ENCODE measurements at regions of chr7 and their contacts with region 1.

Region 1: DNA sequence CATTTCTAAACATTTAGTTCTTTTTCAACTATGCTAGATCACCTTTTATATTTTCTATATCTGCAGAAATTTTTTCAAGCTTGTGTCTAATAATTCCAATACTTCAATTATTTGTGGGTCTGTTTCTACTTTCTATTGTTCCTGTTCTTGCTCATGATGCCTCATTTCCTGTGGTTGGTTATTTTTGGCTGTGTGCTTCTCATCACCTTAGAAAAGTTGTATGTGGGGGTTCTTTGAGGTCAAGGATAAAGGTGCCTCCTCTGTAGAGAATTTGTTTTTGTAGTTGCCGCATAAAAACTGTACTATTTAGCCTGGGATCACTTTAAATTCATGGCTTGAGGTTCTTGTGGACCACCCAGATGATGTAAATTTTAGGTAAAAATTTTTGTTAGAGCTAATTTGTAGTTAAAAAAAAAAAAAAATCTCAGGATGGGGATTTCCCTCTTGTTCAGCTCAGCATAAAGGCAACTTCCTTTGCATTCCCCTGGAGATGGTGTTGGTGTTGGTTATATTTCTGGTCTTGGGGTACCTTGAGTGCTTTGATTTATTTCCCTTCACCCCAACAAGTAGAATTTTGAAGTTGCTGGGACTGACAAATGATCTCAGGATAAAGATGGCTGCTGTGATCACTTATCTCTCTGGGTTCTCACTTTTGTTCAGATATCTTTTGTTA is 27.0 kb upstream of the JAZF1 start:
- DNase-seq: no peak
- H3K4me3 Mint-ChIP-seq: peak overlapping the region; percentile 2
- H3K27ac Mint-ChIP-seq: peak overlapping the region; percentile 7
- H3K4me1 Mint-ChIP-seq: peaks cover 38% of the 10 kb centered on the region
- H3K27me3 Mint-ChIP-seq: peaks cover 8% of the 10 kb centered on the region

Region 2: GRCh38 chr7:28130277-28130676 is 77.3 kb before region 1 on chr7:
- intact Hi-C with region 1: no loop called
- DNase-seq: no peak
- H3K4me3 Mint-ChIP-seq: no peak overlapping the region
- H3K27ac Mint-ChIP-seq: no peak overlapping the region
- H3K4me1 Mint-ChIP-seq: no peaks in the 10 kb centered on the region
- H3K27me3 Mint-ChIP-seq: no peaks in the 10 kb centered on the region

Region 3: GRCh38 chr7:28179120-28180030 is 28.2 kb before region 1 on chr7:
- intact Hi-C with region 1: loop called (anchors 2 kb)
- DNase-seq: peak; percentile 57
- H3K4me3 Mint-ChIP-seq: peak overlapping the region; percentile 82
- H3K27ac Mint-ChIP-seq: peak overlapping the region; percentile 62
- H3K4me1 Mint-ChIP-seq: peaks cover 23% of the 10 kb centered on the region
- H3K27me3 Mint-ChIP-seq: peaks cover 31% of the 10 kb centered on the region

Measured in activated T-helper 1 cell treated with anti-CD3 and anti-CD28 coated beads, Interleukin-12 subunit alpha, Interleukin-12 subunit beta, Interleukin-2, Interleukin-4 antibody, amounts not matched to agents 30 ng/mL and 10 ng/mL and 1 ng/mL, durations not matched to agents 14 hours and 24 hours and 36 hours (primary cell).